Testis (tissue), 5 donors: ENCODE measurements at regions of chr11 and their contacts with region 1.

Region 1: DNA sequence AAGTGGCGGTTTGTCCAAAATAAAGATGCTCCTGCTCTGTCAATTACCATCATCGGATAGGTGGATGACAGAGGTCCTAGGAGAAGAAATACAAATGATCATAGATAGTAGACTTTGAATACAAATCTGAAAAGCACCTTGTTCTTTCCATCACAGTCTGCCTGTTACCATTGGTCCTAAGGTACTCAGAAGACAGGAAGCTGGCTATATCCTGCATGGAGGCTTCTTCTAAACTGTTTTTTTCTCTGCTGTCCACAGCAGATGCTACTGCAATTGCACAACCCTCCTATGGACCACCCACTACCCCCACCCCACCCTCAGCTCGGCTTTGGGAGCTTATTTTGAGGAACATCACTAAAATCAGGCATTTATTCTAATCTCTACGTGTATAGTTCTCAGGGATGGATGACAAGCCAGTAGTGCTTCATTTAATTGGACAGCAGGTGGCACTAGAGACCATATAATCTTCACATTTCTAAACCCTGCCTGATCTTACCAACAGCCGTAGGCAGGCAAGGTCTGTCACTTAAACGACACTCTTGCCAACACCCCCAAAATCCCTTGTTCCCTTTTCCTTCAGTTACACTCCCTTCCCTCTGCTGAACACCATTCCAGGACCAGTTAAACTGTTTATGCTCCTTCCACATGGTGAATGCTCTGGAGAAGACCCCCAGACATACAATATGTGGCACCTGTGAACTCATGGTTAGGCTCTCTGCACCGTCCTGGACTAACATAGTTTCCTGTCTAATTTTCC is 6.6 kb upstream of the PTS start:
- DNase-seq: peak; percentile 49
- H3K4me3 ChIP-seq: no peak overlapping the region
- H3K27ac ChIP-seq: no peak overlapping the region
- H3K4me1 ChIP-seq: no peaks in the 10 kb centered on the region
- H3K27me3 ChIP-seq: no peaks in the 10 kb centered on the region
- CTCF ChIP-seq: peak; percentile 64 to 83 (median 81)
- POLR2A ChIP-seq: no peak

Region 2: GRCh38 chr11:112280268-112281126 is 60.8 kb after region 1 on chr11:
- intact Hi-C with region 1: loop called (anchors 5 kb)
- DNase-seq: peak; percentile 86
- H3K4me3 ChIP-seq: peak overlapping the region; percentile 22 to 49
- H3K27ac ChIP-seq: no peak overlapping the region
- H3K4me1 ChIP-seq: peaks cover 4% of the 10 kb centered on the region
- H3K27me3 ChIP-seq: no peaks in the 10 kb centered on the region
- CTCF ChIP-seq: peak; percentile 62 to 76 (median 75)
- POLR2A ChIP-seq: no peak